ENCODE measurements at regions of chr6 and their contacts with region 1.

Region 1: GRCh38 chr6:159693128-159693893 is at the start of gene SOD2:
- DNase-seq: peak; percentile 87 to 94 (median 94)
- ATAC-seq: peak; percentile 92
- H3K4me3 ChIP-seq: peak within 1 kb of the TSS; percentile 78
- H3K27ac ChIP-seq: peak within 1 kb of the TSS; percentile 98
- H3K4me1 ChIP-seq: peaks cover 3% of the 10 kb centered on the region
- H3K27me3 ChIP-seq: no peaks in the 10 kb centered on the region
- total RNA-seq, gene SOD2: 542 to 606 (median 589) TPM

Region 2: DNA sequence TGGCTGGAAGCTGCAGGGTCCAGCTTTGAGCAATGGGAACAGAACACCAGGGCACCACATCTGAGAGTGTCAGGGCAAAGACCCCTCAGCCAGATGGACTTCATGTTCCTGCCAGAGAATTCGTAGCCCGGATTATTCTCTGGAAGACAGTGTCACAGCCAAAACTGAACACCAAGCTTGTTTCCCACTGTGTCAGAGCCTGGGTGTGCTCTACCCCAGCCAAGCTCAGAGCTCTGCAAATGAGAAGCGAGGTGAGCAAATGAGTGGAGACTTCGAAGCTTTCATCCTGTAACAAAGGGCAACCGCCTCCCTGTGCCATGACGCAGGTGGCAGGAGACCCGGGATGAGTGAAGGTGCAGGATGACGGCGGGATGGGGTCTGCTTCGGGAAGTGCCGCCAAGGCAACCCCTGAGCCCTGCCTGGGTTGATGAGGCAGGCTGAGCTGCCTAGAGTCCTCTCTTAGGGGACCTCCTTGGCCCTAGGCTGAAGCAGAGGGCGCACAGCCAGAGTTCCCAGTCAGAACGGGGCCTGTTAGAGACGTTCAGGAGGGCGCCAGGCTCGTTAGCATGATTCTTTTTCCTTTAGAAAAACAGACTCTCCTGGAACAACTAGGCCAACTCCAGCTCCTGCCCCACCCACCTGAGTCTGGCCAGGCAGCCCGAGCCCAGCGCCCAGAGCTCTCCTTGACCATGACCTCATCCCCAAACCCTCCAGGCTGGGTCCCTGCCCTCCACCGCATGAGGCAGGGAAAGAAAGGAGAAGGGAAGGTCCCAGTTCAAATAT is 188.0 kb before region 1 on chr6:
- intact Hi-C with region 1: no loop called
- DNase-seq: peak; percentile 56 to 91 (median 84)
- ATAC-seq: peak; percentile 74 to 83
- H3K4me3 ChIP-seq: no peak overlapping the region
- H3K27ac ChIP-seq: no peak overlapping the region
- H3K4me1 ChIP-seq: no peaks in the 10 kb centered on the region
- H3K27me3 ChIP-seq: no peaks in the 10 kb centered on the region

Region 3: DNA sequence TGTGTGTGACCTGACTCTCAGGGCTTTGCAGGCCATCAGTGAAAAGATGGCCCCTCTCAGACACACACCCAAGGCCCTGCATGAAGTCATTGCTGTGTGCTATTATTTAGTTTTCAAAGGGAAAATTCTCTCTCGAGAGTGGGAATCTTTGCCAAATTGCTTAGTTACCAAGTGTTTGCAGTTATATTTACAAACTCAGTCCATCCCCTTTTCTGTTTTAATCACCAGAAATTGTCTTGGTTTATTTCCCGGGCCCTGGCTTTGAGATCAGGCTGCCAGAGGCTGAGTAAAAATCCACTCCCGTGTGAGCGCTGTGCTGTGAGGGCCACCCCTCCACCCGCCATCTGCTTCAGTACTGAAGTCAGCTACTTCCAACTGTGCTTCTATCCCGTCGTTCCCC is 163.4 kb before region 1 on chr6:
- intact Hi-C with region 1: no loop called
- DNase-seq: peak in 2 of 3 donors; percentile 59 to 74
- ATAC-seq: peak; percentile 47 to 72
- H3K4me3 ChIP-seq: no peak overlapping the region
- H3K27ac ChIP-seq: no peak overlapping the region
- H3K4me1 ChIP-seq: no peaks in the 10 kb centered on the region
- H3K27me3 ChIP-seq: no peaks in the 10 kb centered on the region

Region 4: GRCh38 chr6:159654483-159655098 is 38.7 kb before region 1 on chr6:
- intact Hi-C with region 1: no loop called
- DNase-seq: no peak
- ATAC-seq: no peak
- H3K4me3 ChIP-seq: no peak overlapping the region
- H3K27ac ChIP-seq: no peak overlapping the region
- H3K4me1 ChIP-seq: no peaks in the 10 kb centered on the region
- H3K27me3 ChIP-seq: no peaks in the 10 kb centered on the region

Region 5: GRCh38 chr6:159726918-159727716 is 33.8 kb after region 1 on chr6 and contains the start of gene WTAP:
- intact Hi-C with region 1: loop called in 3 of 4 experiments (anchors 5 kb)
- DNase-seq: peak; percentile 94 to 98 (median 98)
- ATAC-seq: peak; percentile 97 to 98
- H3K4me3 ChIP-seq: peak within 1 kb of the TSS; percentile 90
- H3K27ac ChIP-seq: peak within 1 kb of the TSS; percentile 99
- H3K4me1 ChIP-seq: peaks cover 4% of the 10 kb centered on the region
- H3K27me3 ChIP-seq: no peaks in the 10 kb centered on the region
- total RNA-seq, gene WTAP: 52.0 to 61.0 (median 56.5) TPM

Region 6: GRCh38 chr6:159789377-159790148 is 96.3 kb after region 1 on chr6 and contains the start of gene TCP1:
- intact Hi-C with region 1: loop called in 1 of 4 experiments (anchors 5 kb)
- DNase-seq: peak; percentile 99 to 100 (median 100)
- ATAC-seq: peak; percentile 95
- H3K4me3 ChIP-seq: peak within 1 kb of the TSS; percentile 87
- H3K27ac ChIP-seq: peak within 1 kb of the TSS; percentile 97
- H3K4me1 ChIP-seq: peaks cover 8% of the 10 kb centered on the region
- H3K27me3 ChIP-seq: no peaks in the 10 kb centered on the region
- total RNA-seq, gene TCP1: 134 to 161 (median 145) TPM

Region 7: DNA sequence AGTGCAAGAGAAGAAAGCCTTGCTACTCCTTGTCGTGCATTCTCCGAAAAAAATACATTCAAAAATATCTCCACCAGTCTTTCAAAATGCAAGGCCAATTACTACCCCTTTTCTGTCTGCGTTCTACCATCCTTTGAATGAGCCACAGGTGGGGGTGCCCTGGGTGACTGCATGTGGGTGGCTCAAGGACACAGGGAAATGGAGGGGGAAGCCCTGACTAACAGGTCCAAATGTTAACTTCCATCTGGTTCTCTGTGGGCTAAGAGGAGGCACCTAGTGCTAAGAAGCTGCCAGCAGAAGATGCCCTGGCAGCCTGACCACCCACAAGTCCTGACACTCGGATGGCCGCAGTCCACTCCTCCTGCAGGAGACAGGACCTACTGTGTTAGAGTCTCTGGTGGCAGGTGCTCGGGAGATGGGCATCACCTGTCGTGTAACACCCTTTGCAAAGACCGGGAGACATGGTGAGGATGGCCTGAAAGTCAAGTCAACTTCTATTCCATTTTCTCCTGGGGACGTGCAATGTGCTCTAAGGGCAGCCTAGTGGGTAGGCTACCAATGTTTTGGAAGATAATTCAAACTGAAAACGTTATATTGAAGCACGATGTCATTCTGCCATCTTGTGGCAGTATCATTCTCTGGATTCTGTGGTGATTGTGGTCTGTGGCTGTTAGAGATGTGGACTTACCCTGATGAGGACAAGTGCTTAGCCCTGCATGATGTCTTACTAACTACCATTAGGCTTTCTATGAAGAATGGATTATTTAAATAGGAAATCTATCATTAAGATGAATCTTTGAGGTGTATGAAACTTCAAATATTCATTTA is 248.2 kb after region 1 on chr6:
- intact Hi-C with region 1: loop called in 2 of 4 experiments (anchors 5 to 10 kb)
- DNase-seq: no peak
- ATAC-seq: peak; percentile 21 to 25
- H3K4me3 ChIP-seq: no peak overlapping the region
- H3K27ac ChIP-seq: no peak overlapping the region
- H3K4me1 ChIP-seq: peaks cover 5% of the 10 kb centered on the region
- H3K27me3 ChIP-seq: no peaks in the 10 kb centered on the region